ENCODE measurements at regions of chr11 and their contacts with region 1.

Region 1: GRCh38 chr11:121655537-121656327 is 203.0 kb upstream of the SORL1-AS1 start:
- H3K4me3 ChIP-seq: peak overlapping the region; percentile 34
- H3K27ac ChIP-seq: peak overlapping the region; percentile 58
- H3K4me1 ChIP-seq: no peaks in the 10 kb centered on the region
- CTCF ChIP-seq: peak; percentile 72

Region 2: DNA sequence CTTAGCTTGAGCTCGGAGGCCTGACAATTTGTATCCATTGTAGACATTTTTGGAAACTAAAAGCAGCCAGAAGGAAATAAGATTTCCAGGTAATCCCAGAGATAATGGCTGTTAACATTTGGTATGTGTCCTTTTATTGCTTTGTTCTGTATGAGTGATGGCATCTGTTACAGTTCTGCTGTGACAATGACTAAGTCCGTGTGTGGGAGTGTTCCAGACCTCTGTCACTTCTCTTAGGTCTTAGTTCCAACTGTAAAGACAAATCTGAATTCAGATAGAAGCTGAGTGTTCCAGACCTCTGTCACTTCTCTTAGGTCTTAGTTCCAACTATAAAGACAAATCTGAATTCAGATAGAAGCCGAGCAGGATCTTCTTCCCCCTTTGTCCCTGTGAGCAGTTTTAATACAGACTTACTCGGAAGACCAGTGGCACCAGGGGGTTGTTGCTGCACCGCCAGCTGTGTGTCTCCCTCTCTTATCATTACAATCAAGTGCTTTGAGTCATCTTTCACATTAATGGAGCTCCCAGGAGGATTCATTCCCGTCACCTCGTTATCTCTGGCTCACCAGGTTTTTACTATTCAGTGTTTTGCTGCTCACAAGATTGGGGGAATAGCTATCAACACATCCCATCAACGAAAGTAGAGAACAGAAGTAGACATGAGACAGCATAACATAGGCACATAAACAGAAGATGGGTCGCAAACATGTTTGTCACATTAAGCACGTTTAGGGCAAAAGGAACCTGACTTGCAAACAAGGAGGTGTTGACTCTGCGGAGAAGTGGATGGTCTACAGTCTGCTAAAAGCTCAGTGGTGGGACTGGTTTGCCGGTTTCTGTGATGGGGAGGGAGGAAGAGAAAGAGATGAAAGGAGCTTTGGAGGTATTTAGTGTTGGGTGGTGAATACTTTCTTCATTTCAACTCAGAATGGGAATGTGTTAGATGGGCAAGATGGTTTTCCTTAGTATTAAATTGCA is 11.9 kb before region 1 on chr11:
- CTCF ChIA-PET with region 1: interaction called, 39 read pairs
- POLR2A ChIA-PET with region 1: no interaction called
- H3K4me3 ChIP-seq: no peak overlapping the region
- H3K27ac ChIP-seq: no peak overlapping the region
- H3K4me1 ChIP-seq: no peaks in the 10 kb centered on the region
- CTCF ChIP-seq: no peak

Region 3: GRCh38 chr11:122101625-122102291 is 446.0 kb after region 1 on chr11:
- CTCF ChIA-PET with region 1: interaction called, 19 read pairs
- POLR2A ChIA-PET with region 1: no interaction called
- H3K4me3 ChIP-seq: no peak overlapping the region
- H3K27ac ChIP-seq: no peak overlapping the region
- H3K4me1 ChIP-seq: no peaks in the 10 kb centered on the region
- CTCF ChIP-seq: no peak

Region 4: GRCh38 chr11:122202951-122203456 is 547.3 kb after region 1 on chr11:
- CTCF ChIA-PET with region 1: interaction called, 24 read pairs
- POLR2A ChIA-PET with region 1: no interaction called
- H3K4me3 ChIP-seq: no peak overlapping the region
- H3K27ac ChIP-seq: no peak overlapping the region
- H3K4me1 ChIP-seq: peaks cover 9% of the 10 kb centered on the region
- CTCF ChIP-seq: 0 out of 2 replicates have a peak, but pooled peaks have one; percentile 30

Region 5: DNA sequence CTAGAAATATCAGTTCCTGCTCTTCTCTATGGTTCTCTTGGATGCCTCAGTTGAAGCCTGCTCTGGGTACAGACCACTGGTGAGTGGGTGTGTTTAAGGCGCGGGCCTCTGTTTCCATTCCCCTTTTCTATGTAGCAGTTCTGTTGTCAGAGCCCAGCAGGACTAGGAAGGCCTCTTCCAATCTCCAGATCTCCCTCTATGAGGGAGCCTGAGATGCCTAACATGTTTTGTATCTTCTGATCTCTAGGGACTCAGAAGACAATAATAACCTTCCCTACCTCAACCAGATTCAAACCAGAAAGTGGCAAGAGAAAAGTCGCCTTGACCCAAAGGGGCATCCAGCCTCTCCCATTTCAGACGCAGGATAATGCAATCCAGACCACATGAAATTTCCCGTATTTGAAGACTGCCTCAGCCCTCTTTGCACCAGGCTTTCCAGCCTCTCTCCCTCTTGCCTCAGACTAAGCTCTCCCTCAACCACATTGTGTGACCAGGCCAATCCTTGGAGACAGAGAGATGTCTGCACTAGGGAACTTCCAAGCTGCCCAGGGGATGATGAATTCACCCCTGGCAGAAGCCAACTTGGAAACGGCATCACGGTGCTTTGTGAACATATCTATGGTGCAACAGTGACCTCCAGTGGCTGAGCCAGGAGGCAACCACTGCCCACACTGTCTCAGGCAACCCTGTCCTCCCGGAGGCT is 849.7 kb after region 1 on chr11:
- CTCF ChIA-PET with region 1: interaction called, 61 read pairs
- POLR2A ChIA-PET with region 1: no interaction called
- H3K4me3 ChIP-seq: no peak overlapping the region
- H3K27ac ChIP-seq: no peak overlapping the region
- H3K4me1 ChIP-seq: no peaks in the 10 kb centered on the region
- CTCF ChIP-seq: peak; percentile 76; the same call in 1 of the 2 replicates

Measured in HEK293 (cell line).